Sciatic nerve (tissue), 2 donors: ENCODE measurements at regions of chrX and their contacts with region 1.

Region 1: GRCh38 chrX:9320940-9321339 is 143.9 kb upstream of the TBL1X start:
- DNase-seq: no peak
- ATAC-seq: no peak

Region 2: GRCh38 chrX:9291629-9292028 is 29.3 kb before region 1 on chrX:
- intact Hi-C with region 1: loop called (anchors 1 kb)
- DNase-seq: no peak
- ATAC-seq: no peak